HCT116 (cell line): ENCODE measurements at regions of chr17 and their contacts with region 1.

Region 1: DNA sequence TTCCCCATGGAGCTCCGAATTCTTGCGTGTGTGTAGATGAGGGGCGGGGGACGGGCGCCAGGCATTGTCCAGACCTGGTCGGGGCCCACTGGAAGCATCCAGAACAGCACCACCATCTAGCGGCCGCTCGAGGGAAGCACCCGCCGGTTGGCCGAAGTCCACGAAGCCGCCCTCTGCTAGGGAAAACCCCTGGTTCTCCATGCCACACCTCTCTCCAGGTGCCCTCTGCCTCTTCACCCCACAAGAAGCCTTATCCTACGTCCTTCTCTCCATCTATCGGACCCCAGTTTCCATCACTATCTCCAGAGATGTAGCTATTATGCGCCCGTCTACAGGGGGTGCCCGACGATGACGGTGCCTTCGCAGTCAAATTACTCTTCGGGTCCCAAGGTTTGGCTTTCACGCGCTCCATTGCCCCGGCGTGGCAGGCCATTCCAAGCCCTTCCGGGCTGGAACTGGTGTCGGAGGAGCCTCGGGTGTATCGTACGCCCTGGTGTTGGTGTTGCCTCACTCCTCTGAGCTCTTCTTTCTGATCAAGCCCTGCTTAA is 617 bp upstream of the SENP3 start:
- DNase-seq: peak; percentile 71
- ATAC-seq: peak; percentile 76
- H3K4me3 ChIP-seq: peak overlapping the region; percentile 79 to 83
- H3K27ac ChIP-seq: peak overlapping the region; percentile 86
- H3K4me1 ChIP-seq: peaks cover 27 to 55% of the 10 kb centered on the region in 2 experiments
- H3K27me3 ChIP-seq: no peaks in the 10 kb centered on the region
- CTCF ChIP-seq: peak; percentile 73 to 88 (median 78)
- POLR2A ChIP-seq: no peak
- RAD21 ChIP-seq: peak; percentile 90

Region 2: DNA sequence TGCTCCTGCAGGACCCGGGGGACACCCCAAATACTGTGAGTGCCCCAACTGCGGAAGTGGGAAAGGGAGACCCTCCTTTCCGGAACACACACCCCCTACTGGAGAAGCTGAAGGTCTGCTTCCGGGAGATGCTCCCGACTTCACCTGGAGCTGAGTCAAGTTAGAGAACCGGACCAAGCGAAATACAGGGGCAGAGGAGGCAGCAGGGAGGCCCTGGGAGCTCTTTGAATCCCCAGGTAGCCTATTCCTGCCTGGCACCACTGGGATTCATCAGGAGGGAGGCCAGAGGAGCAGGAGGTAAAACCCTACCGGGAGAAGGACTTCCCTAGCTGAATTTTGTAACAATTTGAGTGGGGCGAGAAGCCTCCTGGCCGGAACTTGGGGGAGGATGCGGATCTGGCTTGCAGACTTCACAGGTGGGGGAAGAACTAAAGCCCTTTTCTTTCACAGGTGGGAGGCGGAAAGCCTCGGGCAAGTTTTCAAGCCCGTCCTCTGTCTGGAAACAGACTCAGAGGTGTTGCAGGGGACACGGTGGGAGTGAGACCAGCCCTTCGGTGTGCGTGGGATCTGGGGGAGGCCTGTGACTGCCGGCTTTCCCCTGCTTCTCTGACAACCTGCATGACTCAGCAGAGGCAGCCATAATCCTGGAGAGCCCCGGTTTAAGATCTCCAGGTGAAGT is 707.2 kb before region 1 on chr17:
- CTCF ChIA-PET with region 1: no interaction called
- POLR2A ChIA-PET with region 1: no interaction called
- RAD21 ChIA-PET with region 1: no interaction called
- intact Hi-C with region 1: no loop called
- DNase-seq: peak; percentile 68
- ATAC-seq: peak; percentile 97
- H3K4me3 ChIP-seq: peak overlapping the region; percentile 74 to 89
- H3K27ac ChIP-seq: peak overlapping the region; percentile 81
- H3K4me1 ChIP-seq: peaks cover 7 to 19% of the 10 kb centered on the region in 2 experiments; a peak in 3 of 4 replicates
- H3K27me3 ChIP-seq: no peaks in the 10 kb centered on the region
- CTCF ChIP-seq: peak; percentile 40 to 79 (median 69); a peak in 5 of 6 replicates
- POLR2A ChIP-seq: peak; percentile 40
- RAD21 ChIP-seq: no peak

Region 3: GRCh38 chr17:7329374-7329996 is 231.6 kb before region 1 on chr17:
- CTCF ChIA-PET with region 1: interaction called, 12 read pairs
- POLR2A ChIA-PET with region 1: no interaction called
- RAD21 ChIA-PET with region 1: no interaction called
- intact Hi-C with region 1: no loop called
- DNase-seq: peak; percentile 99
- ATAC-seq: peak; percentile 78
- H3K4me3 ChIP-seq: peak overlapping the region; percentile 98 to 99
- H3K27ac ChIP-seq: peak overlapping the region; percentile 81
- H3K4me1 ChIP-seq: peaks cover 3 to 29% of the 10 kb centered on the region in 2 experiments; a peak in 3 of 4 replicates
- H3K27me3 ChIP-seq: no peaks in the 10 kb centered on the region
- CTCF ChIP-seq: no peak
- POLR2A ChIP-seq: peak; percentile 29
- RAD21 ChIP-seq: no peak

Region 4: DNA sequence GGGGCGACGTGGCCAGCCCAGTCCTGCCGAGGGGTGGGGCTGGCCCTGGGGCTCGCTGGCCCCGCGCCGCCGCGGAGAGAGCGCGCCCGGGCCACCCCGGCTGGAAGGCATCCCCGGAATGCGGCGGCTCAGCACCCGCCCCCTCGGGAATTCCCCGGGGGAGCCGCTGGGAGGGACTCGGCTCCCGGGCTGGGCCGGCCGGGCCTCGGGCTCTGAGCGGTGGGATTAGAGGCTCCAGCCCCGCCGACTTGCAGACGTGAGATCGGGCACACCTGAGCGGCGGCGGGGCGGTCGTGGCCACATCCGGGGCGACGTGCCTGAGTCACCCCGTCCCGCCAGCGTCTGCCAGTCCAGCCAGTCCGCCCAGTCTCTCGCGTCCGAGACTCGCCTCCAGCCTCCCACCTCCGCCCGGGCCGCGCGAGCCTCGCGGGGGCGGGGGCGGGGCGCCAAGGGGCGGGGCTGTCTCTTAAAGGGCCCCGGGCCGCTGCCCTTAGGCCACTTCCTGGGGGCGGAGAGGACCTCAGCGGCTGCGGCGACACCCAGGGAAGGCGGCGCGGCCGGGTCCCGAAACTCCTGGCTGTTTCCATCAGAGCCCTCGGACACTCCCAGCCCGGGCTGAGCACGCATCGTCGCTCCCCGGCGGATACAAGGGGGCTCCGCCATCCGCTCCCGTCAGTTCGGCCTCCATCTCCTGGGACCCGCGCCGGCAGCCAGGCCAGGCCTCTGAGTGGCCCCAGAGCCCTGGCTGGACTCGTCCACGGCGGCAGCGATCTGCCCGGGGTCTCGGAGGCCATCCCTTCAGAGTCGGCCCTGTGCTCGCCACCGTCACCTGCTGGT is 209.2 kb before region 1 on chr17 and contains the start of gene KCTD11:
- CTCF ChIA-PET with region 1: interaction called, 17 read pairs
- POLR2A ChIA-PET with region 1: interaction called, 4 read pairs
- RAD21 ChIA-PET with region 1: interaction called in 1 of 2 experiments, 4 read pairs
- intact Hi-C with region 1: loop called (anchors 1 kb)
- DNase-seq: peak; percentile 79
- ATAC-seq: peak; percentile 76
- H3K4me3 ChIP-seq: peak within 1 kb of the TSS; percentile 79 to 89
- H3K27ac ChIP-seq: peak within 1 kb of the TSS; percentile 99
- H3K4me1 ChIP-seq: peaks cover 29 to 69% of the 10 kb centered on the region in 2 experiments
- H3K27me3 ChIP-seq: no peaks in the 10 kb centered on the region
- CTCF ChIP-seq: peak in 1 of 3 experiments; percentile 60; a peak in 2 of 6 replicates
- POLR2A ChIP-seq: peak; percentile 49
- RAD21 ChIP-seq: no peak
- total RNA-seq, gene KCTD11: 5.4 TPM

Region 5: GRCh38 chr17:7444682-7445618 is 116.2 kb before region 1 on chr17 and contains the start of gene CHRNB1:
- CTCF ChIA-PET with region 1: interaction called, 3 read pairs
- POLR2A ChIA-PET with region 1: no interaction called
- RAD21 ChIA-PET with region 1: no interaction called
- intact Hi-C with region 1: loop called (anchors 2 kb)
- DNase-seq: peak; percentile 52
- ATAC-seq: peak; percentile 91
- H3K4me3 ChIP-seq: peak within 1 kb of the TSS; percentile 54 to 64
- H3K27ac ChIP-seq: peak within 1 kb of the TSS; percentile 70
- H3K4me1 ChIP-seq: peaks cover 17 to 26% of the 10 kb centered on the region in 2 experiments
- H3K27me3 ChIP-seq: no peaks in the 10 kb centered on the region
- CTCF ChIP-seq: no peak
- POLR2A ChIP-seq: no peak
- RAD21 ChIP-seq: no peak
- total RNA-seq, gene CHRNB1: 10.4 TPM

Region 6: DNA sequence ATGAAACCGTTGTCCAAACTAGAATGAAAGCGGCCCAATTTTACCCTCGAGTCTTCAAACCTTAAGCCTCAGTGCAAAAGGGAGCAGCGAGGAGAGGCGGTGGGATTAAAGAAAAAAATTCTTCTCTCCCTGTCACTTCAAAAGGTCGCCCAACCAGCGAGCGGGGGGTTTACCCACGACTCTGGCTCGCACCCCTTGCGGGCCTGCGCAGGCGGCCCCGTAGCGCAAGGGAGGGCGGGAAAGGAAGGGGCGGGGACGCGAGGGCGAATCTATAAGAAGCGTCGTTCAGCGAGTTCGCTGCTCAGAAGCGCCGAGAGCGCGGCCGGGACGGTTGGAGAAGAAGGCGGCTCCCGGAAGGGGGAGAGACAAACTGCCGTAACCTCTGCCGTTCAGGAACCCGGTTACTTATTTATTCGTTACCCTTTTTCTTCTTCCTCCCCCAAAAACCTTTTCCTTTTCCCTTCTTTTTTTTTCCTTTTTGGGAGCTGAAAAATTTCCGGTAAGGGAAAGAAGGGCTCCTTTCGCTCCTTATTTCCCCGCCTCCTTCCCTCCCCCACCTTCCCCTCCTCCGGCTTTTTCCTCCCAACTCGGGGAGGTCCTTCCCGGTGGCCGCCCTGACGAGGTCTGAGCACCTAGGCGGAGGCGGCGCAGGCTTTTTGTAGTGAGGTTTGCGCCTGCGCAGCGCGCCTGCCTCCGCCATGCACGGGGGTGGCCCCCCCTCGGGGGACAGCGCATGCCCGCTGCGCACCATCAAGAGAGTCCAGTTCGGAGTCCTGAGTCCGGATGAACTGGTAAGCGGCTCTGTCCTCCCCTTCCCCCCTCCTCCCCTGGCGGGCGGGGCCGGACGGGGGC is 76.8 kb before region 1 on chr17 and contains the start of gene POLR2A:
- CTCF ChIA-PET with region 1: interaction called, 3 read pairs
- POLR2A ChIA-PET with region 1: interaction called, 5 read pairs
- RAD21 ChIA-PET with region 1: no interaction called
- intact Hi-C with region 1: loop called (anchors 10 kb)
- DNase-seq: peak; percentile 92
- ATAC-seq: peak; percentile 78
- H3K4me3 ChIP-seq: peak within 1 kb of the TSS; percentile 95 to 100
- H3K27ac ChIP-seq: peak within 1 kb of the TSS; percentile 87
- H3K4me1 ChIP-seq: peaks cover 12 to 52% of the 10 kb centered on the region in 2 experiments; a peak in 3 of 4 replicates
- H3K27me3 ChIP-seq: no peaks in the 10 kb centered on the region
- CTCF ChIP-seq: no peak
- POLR2A ChIP-seq: peak; percentile 100
- RAD21 ChIP-seq: no peak
- total RNA-seq, gene POLR2A: 205 TPM

Region 7: GRCh38 chr17:7515911-7516610 is 45.0 kb before region 1 on chr17:
- CTCF ChIA-PET with region 1: interaction called, 37 read pairs
- POLR2A ChIA-PET with region 1: interaction called, 3 read pairs
- RAD21 ChIA-PET with region 1: no interaction called
- intact Hi-C with region 1: loop called (anchors 1 kb)
- DNase-seq: no peak
- ATAC-seq: no peak
- H3K4me3 ChIP-seq: no peak overlapping the region
- H3K27ac ChIP-seq: no peak overlapping the region
- H3K4me1 ChIP-seq: no peaks in the 10 kb centered on the region
- H3K27me3 ChIP-seq: no peaks in the 10 kb centered on the region
- CTCF ChIP-seq: no peak
- POLR2A ChIP-seq: no peak
- RAD21 ChIP-seq: no peak